ENCODE measurements at regions of chr11 and their contacts with region 1.

Region 1: DNA sequence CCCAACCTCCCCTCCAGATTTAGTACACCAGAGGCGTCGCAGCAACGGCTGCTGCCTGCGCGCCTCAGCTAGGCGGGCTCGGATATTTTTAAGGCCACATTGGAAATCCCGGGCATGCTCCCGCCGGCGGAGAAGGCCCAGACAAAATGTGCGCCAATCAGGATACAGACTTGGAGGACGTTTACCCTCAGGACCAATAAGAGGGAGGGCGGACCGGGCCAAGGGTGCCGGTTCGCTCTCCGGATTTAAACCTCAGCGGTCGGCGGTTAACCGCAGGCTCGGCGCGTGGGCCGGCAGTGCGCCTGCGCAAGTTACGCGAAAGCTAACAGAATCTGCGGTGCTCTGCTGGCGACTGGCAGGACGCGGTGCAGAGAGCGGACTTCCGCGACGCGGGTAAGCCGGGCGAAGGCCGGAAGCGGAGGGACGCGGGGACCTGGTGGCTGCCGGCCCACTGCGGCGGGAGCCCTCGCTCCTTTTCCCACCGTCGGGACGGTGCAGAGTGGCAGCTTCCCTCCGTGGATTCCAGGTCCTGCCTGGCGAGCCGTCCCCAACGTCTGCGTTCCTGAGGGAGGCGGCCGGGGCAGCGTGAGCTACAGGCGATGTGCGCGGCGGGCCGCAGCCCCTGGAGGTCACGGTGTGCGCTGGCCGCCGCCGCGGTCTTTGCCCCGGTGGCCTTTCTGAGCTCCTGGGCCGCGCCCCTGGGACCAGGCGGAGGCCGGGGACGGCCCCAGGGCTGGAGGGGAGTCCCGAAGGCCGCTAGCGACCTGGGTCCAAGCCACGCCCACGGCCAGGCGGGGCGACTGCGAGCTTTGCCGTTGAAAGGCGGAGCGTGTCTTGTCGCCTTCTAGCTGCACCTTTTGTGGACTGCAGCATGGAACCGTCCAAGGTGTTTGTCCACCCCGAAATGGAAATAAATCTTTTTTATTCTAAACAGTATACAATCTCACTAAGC is at the start of gene HYLS1:
- DNase-seq: peak; percentile 97
- ATAC-seq: peak; percentile 92
- H3K4me3 Mint-ChIP-seq: peak within 1 kb of the TSS; percentile 86
- H3K27ac Mint-ChIP-seq: peak within 1 kb of the TSS; percentile 99
- H3K4me1 Mint-ChIP-seq: peaks cover 33% of the 10 kb centered on the region
- H3K27me3 Mint-ChIP-seq: no peaks in the 10 kb centered on the region
- total RNA-seq, gene HYLS1: 11.1 to 11.7 TPM

Region 2: GRCh38 chr11:125625630-125626287 is 261.9 kb before region 1 on chr11:
- CTCF ChIA-PET with region 1: interaction called, 12 read pairs
- POLR2A ChIA-PET with region 1: interaction called, 7 read pairs
- DNase-seq: peak; percentile 91
- ATAC-seq: peak; percentile 90
- H3K4me3 Mint-ChIP-seq: peak overlapping the region; percentile 90
- H3K27ac Mint-ChIP-seq: peak overlapping the region; percentile 97
- H3K4me1 Mint-ChIP-seq: peaks cover 29% of the 10 kb centered on the region
- H3K27me3 Mint-ChIP-seq: no peaks in the 10 kb centered on the region

Region 3: GRCh38 chr11:125902927-125903710 is 15.5 kb after region 1 on chr11 and contains the start of gene PUS3:
- CTCF ChIA-PET with region 1: interaction called, 18 read pairs
- POLR2A ChIA-PET with region 1: interaction called, 37 read pairs
- DNase-seq: peak; percentile 92
- ATAC-seq: peak; percentile 94
- H3K4me3 Mint-ChIP-seq: peak within 1 kb of the TSS; percentile 96
- H3K27ac Mint-ChIP-seq: peak within 1 kb of the TSS; percentile 90
- H3K4me1 Mint-ChIP-seq: peaks cover 28% of the 10 kb centered on the region
- H3K27me3 Mint-ChIP-seq: peaks cover 15% of the 10 kb centered on the region
- total RNA-seq, gene PUS3: 11.9 to 16.0 TPM

Region 4: GRCh38 chr11:126039485-126040271 is 152.0 kb after region 1 on chr11:
- CTCF ChIA-PET with region 1: no interaction called
- POLR2A ChIA-PET with region 1: no interaction called
- DNase-seq: no peak
- ATAC-seq: no peak
- H3K4me3 Mint-ChIP-seq: no peak overlapping the region
- H3K27ac Mint-ChIP-seq: no peak overlapping the region
- H3K4me1 Mint-ChIP-seq: no peaks in the 10 kb centered on the region
- H3K27me3 Mint-ChIP-seq: peaks cover 3% of the 10 kb centered on the region